ENCODE measurements at regions of chr17 and their contacts with region 1.

Region 1: GRCh38 chr17:16521070-16521727 is 29.2 kb upstream of the LRRC75A start:
- DNase-seq: peak; percentile 83
- H3K4me3 ChIP-seq: no peak overlapping the region; a peak in 1 of 4 replicates
- H3K27ac ChIP-seq: no peak overlapping the region
- H3K4me1 ChIP-seq: peaks cover 5 to 8% of the 10 kb centered on the region in 2 experiments; a peak in 2 of 4 replicates
- H3K27me3 ChIP-seq: no peaks in the 10 kb centered on the region; the same call in 1 of the 2 replicates
- CTCF ChIP-seq: peak; percentile 92
- EP300 ChIP-seq: no peak
- RAD21 ChIP-seq: peak; percentile 99

Region 2: DNA sequence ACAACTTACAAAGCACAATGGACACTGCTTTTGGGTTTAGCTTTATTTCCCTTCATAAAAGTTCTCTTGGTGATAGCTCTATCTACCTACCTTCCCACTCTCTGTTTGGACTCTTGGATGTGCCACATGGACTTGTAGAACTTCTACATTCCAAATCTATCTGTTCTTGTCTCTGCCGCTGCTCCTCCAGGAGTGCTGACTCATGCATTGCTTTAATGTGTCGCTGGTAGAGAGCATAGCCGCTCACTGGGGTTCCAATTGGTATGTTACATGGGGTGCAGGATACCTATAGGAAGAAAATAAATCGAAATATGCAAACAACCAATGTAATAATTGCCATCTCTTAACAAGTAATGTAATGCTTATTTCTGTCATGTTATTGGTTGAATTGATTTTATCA is 429.4 kb before region 1 on chr17:
- CTCF ChIA-PET with region 1: no interaction called
- POLR2A ChIA-PET with region 1: no interaction called
- DNase-seq: no peak
- H3K4me3 ChIP-seq: no peak overlapping the region
- H3K27ac ChIP-seq: no peak overlapping the region
- H3K4me1 ChIP-seq: peaks cover 0 to 4% of the 10 kb centered on the region in 2 experiments; a peak in 1 of 4 replicates
- H3K27me3 ChIP-seq: no peaks in the 10 kb centered on the region
- CTCF ChIP-seq: no peak
- EP300 ChIP-seq: no peak
- RAD21 ChIP-seq: no peak

Region 3: GRCh38 chr17:16428098-16428882 is 92.9 kb before region 1 on chr17:
- CTCF ChIA-PET with region 1: interaction called, 16 read pairs
- POLR2A ChIA-PET with region 1: no interaction called
- DNase-seq: peak; percentile 86
- H3K4me3 ChIP-seq: no peak overlapping the region; a peak in 1 of 4 replicates
- H3K27ac ChIP-seq: no peak overlapping the region; a peak in 1 of 4 replicates
- H3K4me1 ChIP-seq: peaks cover 0 to 2% of the 10 kb centered on the region in 2 experiments; a peak in 1 of 4 replicates
- H3K27me3 ChIP-seq: no peaks in the 10 kb centered on the region
- CTCF ChIP-seq: peak; percentile 65
- EP300 ChIP-seq: no peak
- RAD21 ChIP-seq: peak; percentile 57

Region 4: DNA sequence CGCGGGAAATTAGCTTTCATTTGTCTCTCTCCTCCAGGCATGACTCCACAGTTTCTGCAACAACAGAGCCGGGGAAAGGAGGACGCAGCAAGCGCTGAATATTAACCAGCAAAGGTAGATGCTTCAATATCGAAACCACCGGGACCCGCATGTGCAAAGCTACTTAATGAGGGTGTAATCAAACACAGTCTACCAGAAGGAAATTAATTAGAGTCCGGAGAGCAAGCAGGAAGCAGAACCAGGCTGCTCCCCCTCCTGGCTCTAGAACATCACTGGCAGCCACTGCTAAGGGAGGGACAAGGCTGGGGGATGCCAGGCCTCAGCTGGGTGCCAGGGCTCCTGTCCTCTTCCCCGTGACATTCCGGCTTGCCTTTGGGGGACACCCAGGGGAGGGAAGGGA is 50.9 kb before region 1 on chr17:
- CTCF ChIA-PET with region 1: interaction called, 746 read pairs
- POLR2A ChIA-PET with region 1: no interaction called
- DNase-seq: peak; percentile 62
- H3K4me3 ChIP-seq: no peak overlapping the region
- H3K27ac ChIP-seq: peak overlapping the region in 1 of 2 experiments; percentile 18; a peak in 1 of 4 replicates
- H3K4me1 ChIP-seq: peaks cover 0 to 44% of the 10 kb centered on the region in 2 experiments; a peak in 3 of 4 replicates
- H3K27me3 ChIP-seq: no peaks in the 10 kb centered on the region
- CTCF ChIP-seq: no peak
- EP300 ChIP-seq: no peak
- RAD21 ChIP-seq: no peak

Region 5: DNA sequence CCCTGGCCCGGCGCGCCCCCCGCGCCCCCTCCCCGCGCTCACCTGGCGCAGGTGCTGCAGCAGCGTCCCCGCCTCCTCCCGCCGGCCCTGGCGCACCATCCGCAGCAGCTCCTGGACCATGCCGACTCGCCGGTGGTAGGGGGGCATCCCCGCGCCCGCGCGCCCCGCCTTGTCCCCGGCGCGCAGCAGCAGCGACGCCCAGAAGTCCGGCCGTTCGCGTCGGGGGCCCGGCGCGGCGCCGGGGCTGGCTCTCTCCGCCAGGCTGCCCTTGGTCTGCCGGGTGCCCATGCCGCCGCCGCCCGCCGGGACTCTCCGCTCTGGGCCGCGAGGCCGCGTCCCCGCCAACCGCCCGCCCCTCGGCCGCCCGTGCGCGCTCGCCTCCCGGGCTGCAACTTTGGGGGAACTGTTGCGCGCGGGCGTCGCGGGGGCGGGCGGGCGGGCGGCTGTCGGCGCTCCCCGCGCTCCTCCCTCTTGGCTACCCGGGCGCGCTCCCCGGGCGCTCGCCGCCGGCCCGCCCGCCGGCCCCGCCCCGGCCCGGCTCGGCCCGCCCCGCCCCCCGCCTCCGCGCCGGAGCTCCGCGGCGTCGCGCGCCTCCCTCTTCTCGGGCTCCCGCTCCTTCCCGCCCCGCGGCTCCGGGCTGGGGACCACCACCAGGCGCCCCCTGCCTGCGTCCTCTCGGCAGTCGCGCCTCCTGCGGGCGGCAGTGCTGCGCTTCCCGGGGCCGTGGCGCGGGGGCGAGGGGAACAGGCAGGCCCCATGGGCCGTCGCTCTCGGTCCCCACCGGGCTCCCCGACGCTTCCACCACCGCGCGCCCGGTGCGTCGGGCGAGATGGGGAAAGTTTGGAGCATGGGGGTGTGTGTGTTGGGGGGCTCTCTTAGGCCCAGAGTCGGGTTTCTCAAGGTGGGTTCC is 29.2 kb before region 1 on chr17 and contains the start of gene LRRC75A:
- CTCF ChIA-PET with region 1: interaction called, 22 read pairs
- POLR2A ChIA-PET with region 1: no interaction called
- DNase-seq: peak; percentile 92
- H3K4me3 ChIP-seq: peak within 1 kb of the TSS; percentile 59 to 64
- H3K27ac ChIP-seq: no peak within 1 kb of the TSS; a peak in 1 of 4 replicates
- H3K4me1 ChIP-seq: peaks cover 1 to 25% of the 10 kb centered on the region in 2 experiments; a peak in 2 of 4 replicates
- H3K27me3 ChIP-seq: peaks cover 20% of the 10 kb centered on the region; the same call in 1 of the 2 replicates
- CTCF ChIP-seq: no peak; the same call in 1 of the 2 replicates
- EP300 ChIP-seq: no peak
- RAD21 ChIP-seq: no peak
- polyA plus RNA-seq, gene LRRC75A: 1.2 and 1.3 TPM in 2 replicates

Region 6: DNA sequence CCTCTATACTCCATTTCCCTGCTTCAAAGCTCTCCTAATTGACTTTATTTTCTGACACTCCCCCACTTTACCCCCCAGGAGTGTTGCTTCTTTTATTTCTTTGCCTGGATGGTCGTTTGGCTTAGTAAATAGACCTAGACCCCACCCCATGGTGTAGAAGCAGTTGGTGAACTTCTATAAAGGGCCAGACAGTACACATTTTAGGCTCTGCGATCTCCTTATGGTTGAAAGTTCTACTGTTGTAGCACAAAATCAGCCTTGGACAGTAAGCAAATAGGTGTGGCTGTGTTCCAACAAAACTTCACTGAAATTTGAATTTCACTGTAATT is 15.9 kb after region 1 on chr17:
- CTCF ChIA-PET with region 1: interaction called, 31 read pairs
- POLR2A ChIA-PET with region 1: no interaction called
- DNase-seq: no peak
- H3K4me3 ChIP-seq: peak overlapping the region in 1 of 2 experiments; percentile 70; a peak in 1 of 4 replicates
- H3K27ac ChIP-seq: no peak overlapping the region
- H3K4me1 ChIP-seq: no peaks in the 10 kb centered on the region; a peak in 1 of 4 replicates
- H3K27me3 ChIP-seq: no peaks in the 10 kb centered on the region
- CTCF ChIP-seq: no peak
- EP300 ChIP-seq: no peak
- RAD21 ChIP-seq: no peak

Measured in SK-N-SH (cell line).